Heart left ventricle (tissue), 16 donors: ENCODE measurements at regions of chr3 and their contacts with region 1.

Region 1: DNA sequence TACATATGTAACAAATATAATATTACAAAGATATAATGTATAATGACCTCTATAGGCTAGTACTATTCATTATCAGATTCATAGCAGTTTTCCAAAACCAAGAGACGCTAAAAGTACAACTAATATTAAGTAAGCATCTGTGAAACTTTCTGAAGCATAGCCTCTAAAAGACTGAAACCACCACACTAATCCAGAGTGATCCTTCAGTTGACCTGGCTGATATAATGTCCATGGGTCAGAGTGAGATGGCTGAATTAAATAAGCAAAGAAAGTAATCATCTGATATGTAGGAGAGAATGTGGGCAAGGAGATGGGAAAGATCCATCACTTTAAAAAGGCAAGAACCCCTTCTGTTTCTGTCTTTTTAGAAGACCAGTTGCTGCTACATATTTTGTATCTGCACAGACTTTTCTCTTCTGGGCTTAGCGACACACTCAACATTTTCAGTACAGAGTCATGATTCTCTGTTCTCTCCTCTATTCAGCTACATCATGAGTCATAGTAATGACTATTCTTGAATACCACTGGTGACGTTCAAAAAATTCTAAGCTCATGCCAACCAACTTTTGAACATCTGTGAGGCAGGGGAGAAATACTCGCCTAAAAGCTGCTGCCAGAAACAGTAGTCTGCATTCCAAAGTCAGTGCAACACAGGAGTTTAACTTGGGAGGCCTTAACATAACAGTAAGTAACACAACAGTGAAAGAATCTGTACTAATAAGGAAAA is 149.6 kb downstream of the MAGI1 start:
- DNase-seq: peak in 2 of 5 donors; percentile 19 to 21
- ATAC-seq: peak; percentile 87 to 97 (median 94)
- H3K4me3 ChIP-seq: no peak overlapping the region
- H3K27ac ChIP-seq: peak overlapping the region in 11 of 12 donors; percentile 8 to 80 (median 52)
- H3K4me1 ChIP-seq: peaks cover 0 to 23% (median 7%) of the 10 kb centered on the region in 12 donors
- H3K27me3 ChIP-seq: no peaks in the 10 kb centered on the region
- CTCF ChIP-seq: no peak
- POLR2A ChIP-seq: no peak

Region 2: DNA sequence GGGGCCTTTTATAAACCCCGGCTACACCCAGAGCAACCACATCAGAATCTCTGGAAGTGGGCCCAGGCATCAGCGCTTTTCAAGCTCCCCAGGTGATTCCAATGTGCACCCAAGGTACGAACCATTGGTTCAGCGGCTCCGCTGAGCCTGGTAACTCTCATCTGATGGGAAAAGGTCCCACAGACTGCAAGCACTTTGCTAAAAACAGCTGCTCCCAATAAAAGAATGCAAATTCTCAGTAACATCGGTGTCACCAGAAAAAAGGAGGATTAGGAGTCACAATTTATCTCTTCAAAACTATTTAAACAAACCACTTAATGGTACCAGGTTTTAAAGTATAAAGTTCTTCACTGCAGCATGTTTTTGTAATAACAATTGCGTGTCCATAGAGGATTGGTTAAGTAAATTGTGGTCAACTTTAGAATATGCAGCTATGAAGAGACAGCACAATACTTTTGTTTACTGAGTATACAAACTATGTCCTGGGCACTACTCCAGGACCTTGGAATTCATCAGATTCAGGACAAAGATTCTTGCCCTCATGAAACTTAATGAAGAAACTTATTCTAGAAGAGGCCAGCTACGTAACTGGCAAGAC is 540.6 kb before region 1 on chr3:
- intact Hi-C with region 1: no loop called
- DNase-seq: no peak
- ATAC-seq: no peak
- H3K4me3 ChIP-seq: no peak overlapping the region
- H3K27ac ChIP-seq: no peak overlapping the region
- H3K4me1 ChIP-seq: peaks cover 0 to 18% (median 0%) of the 10 kb centered on the region in 12 donors
- H3K27me3 ChIP-seq: no peaks in the 10 kb centered on the region
- CTCF ChIP-seq: no peak
- POLR2A ChIP-seq: no peak

Region 3: DNA sequence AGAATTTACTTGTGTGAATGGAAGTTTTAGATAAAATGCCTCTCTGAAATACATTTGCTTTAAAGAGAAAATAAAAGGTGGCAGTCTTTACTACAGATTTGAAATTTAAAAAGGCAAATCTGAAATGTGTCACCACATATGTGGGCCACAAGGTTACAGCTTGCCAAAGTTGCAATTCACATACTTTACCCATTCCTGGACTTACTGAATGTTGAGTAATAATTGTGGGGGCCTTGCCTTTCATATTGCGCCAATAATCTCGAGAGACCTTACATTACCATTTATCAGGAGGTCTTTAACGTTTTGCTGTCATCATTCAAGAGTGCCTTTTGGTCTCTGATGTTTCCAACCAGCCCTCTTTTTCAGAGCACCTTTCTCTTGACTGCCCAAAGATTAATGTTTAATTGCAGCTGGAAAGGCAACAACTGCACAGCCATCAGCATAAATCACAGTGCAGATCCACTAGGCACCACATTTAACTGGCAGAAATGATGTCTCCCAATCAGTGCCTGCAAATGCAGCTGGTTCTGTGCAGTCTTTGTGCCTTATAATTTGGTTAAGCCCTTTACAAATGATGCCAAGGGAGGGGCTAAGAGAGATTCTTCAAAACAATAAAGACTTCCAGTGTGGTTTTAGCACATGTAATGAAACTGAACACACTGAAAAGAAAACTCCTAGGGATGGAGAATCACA is 57.3 kb before region 1 on chr3:
- intact Hi-C with region 1: loop called in 1 of 10 experiments (anchors 10 kb)
- DNase-seq: no peak
- ATAC-seq: no peak
- H3K4me3 ChIP-seq: no peak overlapping the region
- H3K27ac ChIP-seq: no peak overlapping the region
- H3K4me1 ChIP-seq: peaks cover 0 to 63% (median 39%) of the 10 kb centered on the region in 12 donors
- H3K27me3 ChIP-seq: no peaks in the 10 kb centered on the region
- CTCF ChIP-seq: no peak
- POLR2A ChIP-seq: no peak